ENCODE measurements at regions of chr1 and their contacts with region 1.

Region 1: DNA sequence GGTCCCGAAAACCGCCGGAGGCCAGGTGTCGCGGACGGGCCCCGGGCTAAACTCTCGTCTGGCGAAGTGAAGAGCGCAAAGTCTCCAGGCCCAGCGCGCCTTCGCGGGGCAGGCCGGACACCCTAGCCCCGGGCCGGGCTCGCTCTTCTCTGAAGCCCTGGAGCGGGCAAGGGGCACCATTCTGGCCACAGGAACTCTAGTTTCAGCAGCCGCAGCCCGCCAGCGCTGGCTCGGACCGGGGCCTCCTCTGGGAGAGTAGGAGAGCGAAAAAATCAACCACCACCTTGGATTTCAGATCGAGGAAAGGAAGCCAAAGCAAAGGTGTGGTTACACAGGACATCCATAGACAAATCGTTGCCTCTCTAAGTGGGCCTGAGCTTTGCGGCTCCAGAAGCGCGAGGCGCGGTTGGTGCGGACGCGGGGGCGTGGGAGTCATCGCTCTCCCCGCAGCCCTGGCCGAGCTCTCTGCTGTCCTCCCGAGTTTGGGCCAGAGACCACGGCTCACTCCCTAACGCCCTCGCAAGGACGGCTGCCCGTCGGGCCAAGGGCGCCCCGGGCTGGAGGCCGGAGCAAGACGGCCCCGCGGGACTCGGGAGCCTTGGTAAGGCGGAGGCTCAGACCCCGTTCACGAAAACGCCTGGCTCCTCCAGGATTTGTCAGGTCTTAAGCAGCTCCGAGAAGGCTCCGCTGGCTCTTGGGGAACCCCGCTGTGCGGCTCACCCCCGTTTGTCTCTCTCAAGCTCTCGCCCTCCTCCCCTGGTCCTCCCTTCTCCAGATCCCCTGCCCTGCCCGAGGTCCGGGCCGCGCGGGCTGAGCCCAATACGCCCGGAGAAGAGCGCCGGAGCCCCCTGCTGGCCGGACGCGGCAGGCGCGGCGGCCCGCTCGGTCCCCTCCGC is 132.9 kb upstream of the DPYD start:
- DNase-seq: peak; percentile 78

Region 2: GRCh38 chr1:98468111-98468717 is 414.5 kb after region 1 on chr1:
- in situ Hi-C with region 1: loop called (anchors 10 kb)
- DNase-seq: peak; percentile 66